ENCODE measurements at regions of chr5 and their contacts with region 1.

Region 1: GRCh38 chr5:95846554-95847260 is 24.2 kb upstream of the GLRX start:
- DNase-seq: peak; percentile 45
- ATAC-seq: peak; percentile 80
- H3K4me3 Mint-ChIP-seq: no peak overlapping the region
- H3K27ac Mint-ChIP-seq: no peak overlapping the region
- H3K4me1 Mint-ChIP-seq: peaks cover 11% of the 10 kb centered on the region
- H3K27me3 Mint-ChIP-seq: no peaks in the 10 kb centered on the region
- CTCF ChIP-seq: peak; percentile 82

Region 2: DNA sequence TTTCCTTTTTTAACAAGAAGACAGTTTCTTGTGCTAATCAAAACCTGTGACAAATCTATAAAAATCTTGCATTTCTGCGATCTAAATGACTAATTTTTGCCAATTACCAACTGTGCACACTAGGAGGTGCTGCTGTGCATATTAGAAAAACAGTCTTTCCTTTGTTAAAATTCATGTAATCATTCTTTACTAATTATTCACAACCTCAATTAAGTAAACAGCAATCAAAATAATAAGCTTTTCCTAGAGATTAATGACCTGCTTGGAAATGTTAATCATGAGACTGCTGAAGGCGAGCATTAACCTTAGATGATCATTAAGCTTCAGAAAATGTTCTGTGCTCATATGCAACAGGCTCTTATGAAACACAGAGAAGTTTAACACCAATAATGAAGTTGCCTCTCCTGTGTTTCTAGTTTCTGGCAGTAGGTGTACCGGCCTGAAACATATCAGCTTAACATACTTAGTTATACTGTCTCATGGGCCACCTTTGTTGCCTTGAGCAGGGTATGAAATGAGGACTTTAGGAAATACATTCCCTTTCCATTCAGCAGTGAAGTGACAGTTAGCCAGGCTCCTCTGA is 182.4 kb before region 1 on chr5:
- CTCF ChIA-PET with region 1: interaction called, 16 read pairs
- POLR2A ChIA-PET with region 1: no interaction called
- intact Hi-C with region 1: loop called (anchors 1 kb)
- DNase-seq: no peak
- ATAC-seq: no peak
- H3K4me3 Mint-ChIP-seq: no peak overlapping the region
- H3K27ac Mint-ChIP-seq: no peak overlapping the region
- H3K4me1 Mint-ChIP-seq: no peaks in the 10 kb centered on the region
- H3K27me3 Mint-ChIP-seq: peaks cover 1% of the 10 kb centered on the region
- CTCF ChIP-seq: peak; percentile 81

Region 3: DNA sequence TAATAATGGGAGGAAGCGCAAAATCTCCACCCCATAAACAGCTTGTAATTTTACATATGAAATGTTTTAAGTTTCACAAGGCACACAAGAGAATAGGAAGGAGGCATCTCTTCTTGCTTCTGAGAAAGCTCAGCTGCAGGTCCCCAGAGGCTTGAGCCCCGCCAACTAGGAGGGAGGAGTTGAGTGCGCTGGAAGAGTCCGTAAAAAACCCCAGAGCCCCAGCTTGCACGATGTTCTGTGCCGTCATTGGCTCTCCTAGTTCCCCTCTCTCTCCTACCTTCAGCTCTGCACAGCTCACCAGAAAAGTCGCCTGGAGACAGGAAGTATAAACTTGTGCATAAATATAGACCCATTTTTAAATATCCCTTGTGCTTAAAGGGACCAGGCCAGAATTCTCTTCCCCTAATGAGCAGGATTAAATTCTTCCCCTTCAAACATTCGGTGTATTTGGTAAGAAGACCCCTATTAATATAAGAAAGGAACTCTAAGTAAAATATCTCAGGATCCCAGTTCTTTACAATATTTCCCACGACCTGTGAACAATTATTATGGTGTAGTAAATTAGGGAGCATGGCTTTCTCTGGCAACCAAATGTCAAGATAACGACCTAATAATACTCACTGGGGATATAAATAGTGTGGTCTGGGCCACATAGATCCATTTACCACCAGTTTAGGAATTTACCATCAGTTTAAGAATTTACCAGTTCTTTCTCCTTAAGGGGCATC is 37.9 kb before region 1 on chr5:
- CTCF ChIA-PET with region 1: interaction called, 9 read pairs
- POLR2A ChIA-PET with region 1: interaction called, 11 read pairs
- intact Hi-C with region 1: loop called (anchors 1 kb)
- DNase-seq: peak; percentile 72
- ATAC-seq: peak; percentile 99
- H3K4me3 Mint-ChIP-seq: peak overlapping the region; percentile 77
- H3K27ac Mint-ChIP-seq: peak overlapping the region; percentile 95
- H3K4me1 Mint-ChIP-seq: peaks cover 56% of the 10 kb centered on the region
- H3K27me3 Mint-ChIP-seq: no peaks in the 10 kb centered on the region
- CTCF ChIP-seq: no peak

Region 4: GRCh38 chr5:95822542-95823181 is 24.0 kb before region 1 on chr5 and contains the start of gene GLRX:
- CTCF ChIA-PET with region 1: interaction called, 10 read pairs
- POLR2A ChIA-PET with region 1: interaction called, 233 read pairs
- intact Hi-C with region 1: loop called (anchors 1 kb)
- DNase-seq: no peak
- ATAC-seq: peak; percentile 30
- H3K4me3 Mint-ChIP-seq: peak within 1 kb of the TSS; percentile 95
- H3K27ac Mint-ChIP-seq: peak within 1 kb of the TSS; percentile 98
- H3K4me1 Mint-ChIP-seq: peaks cover 72% of the 10 kb centered on the region
- H3K27me3 Mint-ChIP-seq: no peaks in the 10 kb centered on the region
- CTCF ChIP-seq: no peak
- total RNA-seq, gene GLRX: 55.4 and 60.2 TPM in 2 replicates

Region 5: DNA sequence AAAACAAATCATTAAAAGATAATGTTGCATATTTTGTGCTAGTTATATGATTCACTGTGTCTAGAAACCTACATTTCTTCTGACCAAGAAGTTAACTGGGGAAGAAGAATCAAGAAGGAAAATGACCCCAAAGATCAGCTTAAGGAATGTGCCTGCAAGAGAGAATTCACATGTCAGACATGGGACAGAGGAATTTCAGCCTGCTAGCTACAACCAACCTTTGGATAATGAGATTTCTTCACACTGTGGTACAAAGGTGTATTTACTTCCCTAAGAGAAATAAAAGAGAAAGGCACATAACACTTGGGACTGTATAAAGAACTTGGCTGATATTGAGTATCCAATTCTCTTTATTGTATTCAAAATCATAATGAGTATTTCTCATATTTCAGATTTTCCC is 154.6 kb after region 1 on chr5:
- CTCF ChIA-PET with region 1: no interaction called
- POLR2A ChIA-PET with region 1: no interaction called
- intact Hi-C with region 1: no loop called
- DNase-seq: no peak
- ATAC-seq: no peak
- H3K4me3 Mint-ChIP-seq: no peak overlapping the region
- H3K27ac Mint-ChIP-seq: no peak overlapping the region
- H3K4me1 Mint-ChIP-seq: no peaks in the 10 kb centered on the region
- H3K27me3 Mint-ChIP-seq: peaks cover 3% of the 10 kb centered on the region
- CTCF ChIP-seq: no peak

Region 6: DNA sequence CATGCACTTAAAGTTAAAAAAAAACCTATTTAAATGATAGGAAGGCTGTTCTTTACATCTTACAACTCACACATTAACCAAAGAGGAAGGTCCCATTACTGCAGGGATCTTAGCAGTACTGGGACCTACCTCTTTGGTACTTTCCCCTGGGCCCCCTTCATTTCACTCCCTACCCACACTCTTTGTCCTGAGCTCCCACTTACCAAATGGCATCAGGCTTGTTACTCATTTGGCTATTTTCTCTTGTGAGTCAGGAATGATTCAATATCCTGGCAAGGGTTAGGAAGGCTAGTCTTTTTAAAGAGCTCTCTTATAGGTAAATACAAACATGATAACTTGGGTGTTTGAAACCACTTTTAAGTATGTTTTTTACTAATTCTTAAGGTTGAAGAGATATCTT is 232.4 kb after region 1 on chr5:
- CTCF ChIA-PET with region 1: no interaction called
- POLR2A ChIA-PET with region 1: no interaction called
- intact Hi-C with region 1: no loop called
- DNase-seq: no peak
- ATAC-seq: no peak
- H3K4me3 Mint-ChIP-seq: no peak overlapping the region
- H3K27ac Mint-ChIP-seq: no peak overlapping the region
- H3K4me1 Mint-ChIP-seq: no peaks in the 10 kb centered on the region
- H3K27me3 Mint-ChIP-seq: peaks cover 8% of the 10 kb centered on the region
- CTCF ChIP-seq: no peak

Region 7: DNA sequence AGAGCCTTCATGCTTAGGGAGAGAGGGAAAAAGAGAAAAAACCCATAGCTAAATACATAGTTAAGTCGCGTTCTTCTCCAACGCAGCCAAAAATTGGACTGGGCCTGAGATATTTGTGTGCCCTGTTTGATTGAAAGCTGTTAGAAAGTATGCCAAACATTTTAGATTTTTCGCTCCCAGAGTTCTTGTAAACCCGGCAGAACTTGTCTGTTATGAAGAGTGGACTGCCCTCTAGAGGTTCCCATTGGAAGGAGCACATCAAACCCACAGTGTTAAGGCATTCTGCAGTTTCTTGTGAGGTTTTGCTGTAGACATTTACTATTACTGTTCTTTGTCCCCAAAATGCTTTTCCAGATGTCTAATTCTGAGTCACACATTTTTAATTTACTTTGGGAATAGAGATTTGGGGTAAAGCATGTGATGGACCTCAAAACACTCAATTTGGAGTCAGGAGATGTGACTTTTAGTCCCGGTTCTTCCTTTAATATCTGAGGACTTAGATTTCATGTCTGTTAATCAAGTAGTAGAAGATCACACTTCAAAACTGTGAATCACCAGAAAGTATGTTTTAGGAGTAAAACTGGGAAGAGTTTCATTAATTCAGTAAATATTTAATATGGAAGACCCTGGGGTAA is 489.8 kb after region 1 on chr5:
- CTCF ChIA-PET with region 1: interaction called, 17 read pairs
- POLR2A ChIA-PET with region 1: no interaction called
- intact Hi-C with region 1: no loop called
- DNase-seq: no peak
- ATAC-seq: peak; percentile 91
- H3K4me3 Mint-ChIP-seq: no peak overlapping the region
- H3K27ac Mint-ChIP-seq: no peak overlapping the region
- H3K4me1 Mint-ChIP-seq: no peaks in the 10 kb centered on the region
- H3K27me3 Mint-ChIP-seq: peaks cover 6% of the 10 kb centered on the region
- CTCF ChIP-seq: peak; percentile 23

Measured in activated B cell treated with CpG ODN at 0.5 μM for 24 hours (primary cell).